Calu3 (cell line): ENCODE measurements at regions of chr1 and their contacts with region 1.

Region 1: DNA sequence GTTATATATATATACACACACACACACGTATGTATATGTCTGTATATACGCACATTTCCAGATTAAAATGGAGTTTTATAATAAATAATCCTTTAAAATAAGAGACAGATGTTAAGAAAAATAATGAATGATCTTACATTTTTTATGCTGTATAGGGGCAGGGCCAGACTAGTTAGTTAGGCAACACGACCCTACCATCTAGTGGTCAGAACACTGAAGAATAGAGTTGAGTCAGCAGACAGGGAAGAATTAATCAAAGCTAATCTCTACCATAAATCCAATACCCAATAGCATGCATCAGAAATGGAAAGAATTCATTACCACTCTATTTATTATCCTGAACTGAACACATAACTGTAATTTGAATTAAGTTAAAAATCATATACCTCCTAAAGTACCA is 156.7 kb downstream of the BRINP3 start:
- DNase-seq: peak; percentile 53
- H3K4me3 Mint-ChIP-seq: no peak overlapping the region
- H3K27ac Mint-ChIP-seq: no peak overlapping the region
- H3K4me1 Mint-ChIP-seq: no peaks in the 10 kb centered on the region
- H3K27me3 Mint-ChIP-seq: no peaks in the 10 kb centered on the region
- CTCF ChIP-seq: peak; percentile 46

Region 2: DNA sequence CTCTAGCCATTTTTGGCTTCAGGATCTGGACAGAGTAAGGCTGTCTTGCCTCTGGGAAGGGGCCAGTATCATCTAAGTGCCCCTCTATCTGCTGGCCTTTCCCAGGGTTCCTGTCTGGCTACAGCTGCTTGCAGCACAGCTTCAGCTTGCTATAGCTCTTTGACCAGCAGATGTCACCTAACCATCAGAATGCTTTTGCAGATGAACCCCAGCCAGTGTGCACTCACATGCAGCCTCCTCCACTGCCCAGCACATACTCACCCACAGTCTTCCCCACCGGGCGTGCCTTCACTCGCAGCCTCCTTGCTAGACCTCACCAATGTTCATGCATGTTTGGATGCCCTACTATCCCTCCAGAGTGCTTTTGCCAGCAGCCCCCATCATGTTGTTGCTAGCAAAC is 612.3 kb before region 1 on chr1:
- CTCF ChIA-PET with region 1: interaction called, 6 read pairs
- intact Hi-C with region 1: loop called (anchors 1 kb)
- DNase-seq: peak; percentile 16
- H3K4me3 Mint-ChIP-seq: no peak overlapping the region
- H3K27ac Mint-ChIP-seq: no peak overlapping the region
- H3K4me1 Mint-ChIP-seq: no peaks in the 10 kb centered on the region
- H3K27me3 Mint-ChIP-seq: no peaks in the 10 kb centered on the region
- CTCF ChIP-seq: no peak

Region 3: GRCh38 chr1:189868021-189868420 is 452.9 kb before region 1 on chr1:
- CTCF ChIA-PET with region 1: no interaction called
- intact Hi-C with region 1: loop called (anchors 10 kb)
- DNase-seq: no peak
- H3K4me3 Mint-ChIP-seq: no peak overlapping the region
- H3K27ac Mint-ChIP-seq: no peak overlapping the region
- H3K4me1 Mint-ChIP-seq: no peaks in the 10 kb centered on the region
- H3K27me3 Mint-ChIP-seq: no peaks in the 10 kb centered on the region
- CTCF ChIP-seq: no peak